ENCODE measurements at regions of chr9 and their contacts with region 1.

Region 1: GRCh38 chr9:22124263-22125011 is 115.3 kb upstream of the CDKN2B start:
- H3K4me3 Mint-ChIP-seq: no peak overlapping the region
- H3K27ac Mint-ChIP-seq: no peak overlapping the region
- H3K4me1 Mint-ChIP-seq: peaks cover 5% of the 10 kb centered on the region
- H3K27me3 Mint-ChIP-seq: peaks cover 41% of the 10 kb centered on the region

Region 2: GRCh38 chr9:21357479-21358460 is 766.7 kb before region 1 on chr9:
- intact Hi-C with region 1: no loop called
- H3K4me3 Mint-ChIP-seq: no peak overlapping the region
- H3K27ac Mint-ChIP-seq: no peak overlapping the region
- H3K4me1 Mint-ChIP-seq: peaks cover 13% of the 10 kb centered on the region
- H3K27me3 Mint-ChIP-seq: peaks cover 29% of the 10 kb centered on the region

Region 3: DNA sequence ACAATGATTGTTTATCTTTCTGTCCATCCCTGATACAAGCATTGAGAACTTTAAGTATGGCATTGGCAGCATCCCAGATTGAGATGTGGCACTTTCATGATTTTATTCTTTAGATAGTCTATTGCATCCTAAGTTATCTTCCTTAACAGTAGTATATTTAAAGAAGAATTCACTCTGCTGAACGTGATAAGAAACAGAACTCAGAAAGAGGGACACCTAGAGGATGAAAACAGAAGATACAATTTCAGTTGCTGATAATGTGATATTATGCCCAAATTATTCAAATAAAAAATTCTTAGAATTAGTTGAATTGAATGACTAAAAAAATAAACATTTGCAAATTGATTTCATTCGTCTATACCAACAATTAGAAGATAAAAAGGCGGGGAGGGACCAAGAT is 104.1 kb after region 1 on chr9:
- intact Hi-C with region 1: loop called (anchors 5 kb)
- H3K4me3 Mint-ChIP-seq: no peak overlapping the region
- H3K27ac Mint-ChIP-seq: no peak overlapping the region
- H3K4me1 Mint-ChIP-seq: no peaks in the 10 kb centered on the region
- H3K27me3 Mint-ChIP-seq: peaks cover 51% of the 10 kb centered on the region

Region 4: GRCh38 chr9:22257026-22257425 is 132.6 kb after region 1 on chr9:
- intact Hi-C with region 1: no loop called
- H3K4me3 Mint-ChIP-seq: no peak overlapping the region
- H3K27ac Mint-ChIP-seq: no peak overlapping the region
- H3K4me1 Mint-ChIP-seq: no peaks in the 10 kb centered on the region
- H3K27me3 Mint-ChIP-seq: peaks cover 11% of the 10 kb centered on the region